ENCODE measurements at regions of chr11 and their contacts with region 1.

Region 1: GRCh38 chr11:121655537-121656327 is 203.0 kb upstream of the SORL1-AS1 start:
- DNase-seq: peak; percentile 68
- H3K4me3 Mint-ChIP-seq: peak overlapping the region; percentile 57
- H3K27ac Mint-ChIP-seq: peak overlapping the region; percentile 2
- H3K4me1 Mint-ChIP-seq: peaks cover 25% of the 10 kb centered on the region
- H3K27me3 Mint-ChIP-seq: peaks cover 21% of the 10 kb centered on the region

Region 2: DNA sequence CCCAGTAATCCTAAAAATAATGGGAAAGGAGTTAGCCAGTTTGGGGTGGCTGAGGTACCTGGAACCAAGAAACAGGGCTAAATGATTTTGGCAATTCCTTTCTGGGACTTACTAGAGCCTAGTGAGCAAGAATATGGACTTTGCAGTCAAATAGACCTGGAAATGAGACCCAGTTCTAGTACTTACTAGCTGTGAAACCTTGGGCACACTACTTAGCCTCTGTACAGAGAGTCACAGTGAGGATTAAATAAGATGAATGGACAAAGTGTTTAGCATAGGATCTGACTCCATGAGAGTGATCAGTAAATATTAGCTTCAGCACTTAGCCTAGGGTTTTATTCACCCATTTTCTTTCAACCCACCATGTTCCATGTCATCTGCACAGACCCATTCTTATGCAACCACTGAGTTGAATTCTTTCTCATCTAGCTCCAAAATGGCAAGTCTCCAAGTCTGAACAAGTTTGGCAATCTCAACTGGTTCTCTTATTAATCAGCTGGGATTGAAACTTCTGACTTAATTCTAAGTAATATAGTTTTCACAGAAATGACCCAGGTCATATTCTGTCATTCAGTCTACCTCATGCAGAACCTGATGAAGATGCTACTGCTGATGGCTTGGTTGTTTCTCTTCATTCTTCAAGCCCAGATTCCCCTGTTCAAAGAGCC is 218.6 kb before region 1 on chr11:
- CTCF ChIA-PET with region 1: no interaction called
- POLR2A ChIA-PET with region 1: no interaction called
- DNase-seq: no peak
- H3K4me3 Mint-ChIP-seq: no peak overlapping the region
- H3K27ac Mint-ChIP-seq: no peak overlapping the region
- H3K4me1 Mint-ChIP-seq: peaks cover 21% of the 10 kb centered on the region
- H3K27me3 Mint-ChIP-seq: no peaks in the 10 kb centered on the region

Region 3: GRCh38 chr11:121643535-121644512 is 11.9 kb before region 1 on chr11:
- CTCF ChIA-PET with region 1: interaction called, 11 read pairs
- POLR2A ChIA-PET with region 1: interaction called, 4 read pairs
- DNase-seq: no peak
- H3K4me3 Mint-ChIP-seq: no peak overlapping the region
- H3K27ac Mint-ChIP-seq: no peak overlapping the region
- H3K4me1 Mint-ChIP-seq: no peaks in the 10 kb centered on the region
- H3K27me3 Mint-ChIP-seq: no peaks in the 10 kb centered on the region

Region 4: GRCh38 chr11:122202951-122203456 is 547.3 kb after region 1 on chr11:
- CTCF ChIA-PET with region 1: interaction called, 10 read pairs
- POLR2A ChIA-PET with region 1: no interaction called
- DNase-seq: peak; percentile 35
- H3K4me3 Mint-ChIP-seq: no peak overlapping the region
- H3K27ac Mint-ChIP-seq: no peak overlapping the region
- H3K4me1 Mint-ChIP-seq: no peaks in the 10 kb centered on the region
- H3K27me3 Mint-ChIP-seq: peaks cover 13% of the 10 kb centered on the region